ENCODE measurements at regions of chr7 and their contacts with region 1.

Region 1: GRCh38 chr7:99928994-99929729 is at the start of gene GJC3:
- DNase-seq: peak; percentile 80

Region 2: GRCh38 chr7:99997545-99998137 is 68.5 kb after region 1 on chr7:
- in situ Hi-C with region 1: loop called (anchors 10 kb)
- DNase-seq: no peak

Measured in ACHN (cell line).